A549 (cell line): ENCODE measurements at regions of chr14 and their contacts with region 1.

Region 1: DNA sequence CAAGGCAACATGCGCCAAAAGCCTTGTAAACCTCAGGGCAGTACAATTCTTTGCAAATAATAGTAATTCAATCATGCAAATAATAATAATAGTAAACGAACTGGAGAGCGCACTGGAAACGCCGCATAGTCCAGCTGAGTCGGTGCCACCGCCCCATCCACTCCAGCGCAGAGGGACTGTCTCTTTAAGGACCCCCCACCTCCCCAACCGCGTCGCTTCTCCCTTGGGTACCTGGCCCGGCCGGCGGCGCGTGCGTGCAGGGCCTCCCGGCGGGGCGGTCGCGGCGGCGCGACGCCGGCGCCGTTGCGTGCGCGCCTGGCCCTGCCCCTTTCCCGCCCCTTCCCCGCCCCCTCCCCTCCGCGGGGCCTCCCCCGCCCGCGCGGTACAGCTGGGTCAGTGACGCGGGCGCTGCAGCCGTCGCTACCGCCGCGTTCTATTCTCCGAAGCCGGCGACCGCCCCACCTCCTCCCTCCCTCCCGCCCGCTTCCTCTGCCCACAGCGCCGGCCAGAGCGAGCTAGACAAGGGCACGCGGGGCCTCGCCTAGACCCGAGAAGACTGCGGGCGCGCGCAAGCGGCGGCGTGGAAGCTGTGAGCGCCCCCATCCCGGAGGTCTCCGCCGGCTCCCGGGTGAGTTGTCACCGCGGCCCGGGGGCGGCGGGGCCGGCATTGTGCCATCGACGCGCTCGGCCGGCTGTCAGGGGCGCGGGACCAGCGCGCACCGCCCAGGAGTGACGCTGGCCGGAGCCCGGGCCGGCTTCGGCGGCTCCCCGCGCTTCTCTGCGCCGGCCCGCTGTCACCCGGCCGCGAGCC is at the start of gene SUSD6:
- DNase-seq: peak; percentile 86 to 91
- ATAC-seq: peak; percentile 89 to 92
- H3K4me3 ChIP-seq: peak within 1 kb of the TSS; percentile 95
- H3K27ac ChIP-seq: peak within 1 kb of the TSS; percentile 83 to 93
- H3K4me1 ChIP-seq: peaks cover 30% of the 10 kb centered on the region
- CTCF ChIP-seq: no peak
- EP300 ChIP-seq: no peak
- POLR2A ChIP-seq: peak; percentile 35
- RAD21 ChIP-seq: peak in 1 of 2 experiments; percentile 25; a peak in 1 of 5 replicates
- polyA plus RNA-seq, gene SUSD6: 7.0 and 7.9 TPM in 2 replicates

Region 2: DNA sequence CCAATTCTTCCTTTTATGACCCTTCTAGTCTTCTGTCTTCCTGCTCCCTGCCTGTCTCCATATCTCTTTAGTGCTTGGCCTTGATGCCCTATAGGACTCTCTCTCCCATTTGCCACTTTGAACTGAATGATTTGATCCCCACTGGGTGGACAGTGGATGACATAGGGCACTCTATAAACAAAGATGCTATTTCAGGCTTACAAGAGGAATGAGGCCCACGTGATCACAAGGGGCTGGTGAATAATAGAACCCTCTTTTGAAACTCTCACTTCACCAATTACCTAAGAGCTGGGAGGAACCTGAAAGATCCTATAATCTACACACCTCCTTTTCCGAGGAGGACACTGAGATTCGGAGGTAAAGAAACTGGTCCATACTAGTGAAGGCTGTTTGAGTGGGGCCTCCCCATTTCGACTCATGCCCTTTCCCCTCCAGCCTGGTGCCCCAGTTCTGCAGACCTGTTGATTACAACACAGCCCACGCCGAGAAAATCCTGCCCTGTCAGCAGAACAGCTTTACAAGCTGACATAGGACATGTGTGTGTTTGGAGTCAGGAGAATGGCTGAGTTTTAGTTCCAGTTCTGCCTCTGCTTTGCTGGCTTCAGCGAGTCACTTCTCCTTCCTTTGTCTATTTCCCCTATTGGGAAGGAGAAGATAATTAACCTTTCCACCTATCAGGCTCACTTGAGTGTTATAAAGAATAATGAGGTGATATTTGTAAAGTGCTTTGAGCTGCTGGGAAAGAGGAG is 1218.8 kb before region 1 on chr14:
- CTCF ChIA-PET with region 1: no interaction called
- POLR2A ChIA-PET with region 1: no interaction called
- DNase-seq: no peak
- ATAC-seq: no peak
- H3K4me3 ChIP-seq: no peak overlapping the region
- H3K27ac ChIP-seq: peak overlapping the region in 1 of 2 experiments; percentile 77; a peak in 3 of 6 replicates
- H3K4me1 ChIP-seq: peaks cover 21% of the 10 kb centered on the region
- CTCF ChIP-seq: no peak
- EP300 ChIP-seq: no peak
- POLR2A ChIP-seq: no peak
- RAD21 ChIP-seq: no peak

Region 3: DNA sequence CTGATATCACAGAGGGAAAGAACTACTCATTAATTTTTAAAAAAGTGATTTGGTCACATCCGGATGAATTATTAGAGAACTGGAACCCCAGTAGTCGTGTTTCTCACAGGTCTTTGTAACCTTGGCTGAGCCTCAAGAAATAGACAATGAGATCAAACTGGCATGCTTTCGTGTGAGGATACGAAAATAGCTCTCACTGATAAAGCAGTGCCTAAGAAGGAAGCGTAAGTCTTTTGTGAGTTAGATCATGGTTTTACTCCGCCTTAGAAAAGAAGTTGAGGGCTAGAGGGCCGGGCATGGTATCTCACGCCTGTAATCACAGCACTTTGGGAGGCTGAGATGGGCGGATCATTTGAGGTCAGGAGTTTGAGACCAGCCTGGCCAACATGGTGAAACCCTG is 385.2 kb before region 1 on chr14:
- CTCF ChIA-PET with region 1: no interaction called
- POLR2A ChIA-PET with region 1: no interaction called
- DNase-seq: no peak
- ATAC-seq: no peak
- H3K4me3 ChIP-seq: no peak overlapping the region
- H3K27ac ChIP-seq: no peak overlapping the region
- H3K4me1 ChIP-seq: no peaks in the 10 kb centered on the region
- CTCF ChIP-seq: no peak
- EP300 ChIP-seq: no peak
- POLR2A ChIP-seq: no peak
- RAD21 ChIP-seq: no peak

Region 4: GRCh38 chr14:69708586-69709174 is 97.3 kb after region 1 on chr14:
- CTCF ChIA-PET with region 1: interaction called, 12 read pairs
- POLR2A ChIA-PET with region 1: no interaction called
- DNase-seq: peak in 1 of 2 experiments; percentile 40
- ATAC-seq: peak; percentile 92 to 94
- H3K4me3 ChIP-seq: no peak overlapping the region
- H3K27ac ChIP-seq: no peak overlapping the region
- H3K4me1 ChIP-seq: peaks cover 15% of the 10 kb centered on the region
- CTCF ChIP-seq: peak; percentile 35; the same call in 2 of the 3 replicates
- EP300 ChIP-seq: no peak
- POLR2A ChIP-seq: no peak
- RAD21 ChIP-seq: peak; percentile 25 to 36; a peak in 2 of 5 replicates

Region 5: GRCh38 chr14:69766984-69767368 is 155.6 kb after region 1 on chr14 and contains the start of gene SRSF5:
- CTCF ChIA-PET with region 1: no interaction called
- POLR2A ChIA-PET with region 1: interaction called, 10 read pairs
- DNase-seq: peak; percentile 89 to 98
- ATAC-seq: peak; percentile 94 to 95
- H3K4me3 ChIP-seq: peak within 1 kb of the TSS; percentile 80
- H3K27ac ChIP-seq: peak within 1 kb of the TSS; percentile 92 to 94
- H3K4me1 ChIP-seq: peaks cover 17% of the 10 kb centered on the region; the same call in 2 of the 3 replicates
- CTCF ChIP-seq: no peak
- EP300 ChIP-seq: no peak
- POLR2A ChIP-seq: peak; percentile 99
- RAD21 ChIP-seq: no peak
- polyA plus RNA-seq, gene SRSF5: 184 and 355 TPM in 2 replicates